ENCODE measurements at regions of chr5 and their contacts with region 1.

Region 1: DNA sequence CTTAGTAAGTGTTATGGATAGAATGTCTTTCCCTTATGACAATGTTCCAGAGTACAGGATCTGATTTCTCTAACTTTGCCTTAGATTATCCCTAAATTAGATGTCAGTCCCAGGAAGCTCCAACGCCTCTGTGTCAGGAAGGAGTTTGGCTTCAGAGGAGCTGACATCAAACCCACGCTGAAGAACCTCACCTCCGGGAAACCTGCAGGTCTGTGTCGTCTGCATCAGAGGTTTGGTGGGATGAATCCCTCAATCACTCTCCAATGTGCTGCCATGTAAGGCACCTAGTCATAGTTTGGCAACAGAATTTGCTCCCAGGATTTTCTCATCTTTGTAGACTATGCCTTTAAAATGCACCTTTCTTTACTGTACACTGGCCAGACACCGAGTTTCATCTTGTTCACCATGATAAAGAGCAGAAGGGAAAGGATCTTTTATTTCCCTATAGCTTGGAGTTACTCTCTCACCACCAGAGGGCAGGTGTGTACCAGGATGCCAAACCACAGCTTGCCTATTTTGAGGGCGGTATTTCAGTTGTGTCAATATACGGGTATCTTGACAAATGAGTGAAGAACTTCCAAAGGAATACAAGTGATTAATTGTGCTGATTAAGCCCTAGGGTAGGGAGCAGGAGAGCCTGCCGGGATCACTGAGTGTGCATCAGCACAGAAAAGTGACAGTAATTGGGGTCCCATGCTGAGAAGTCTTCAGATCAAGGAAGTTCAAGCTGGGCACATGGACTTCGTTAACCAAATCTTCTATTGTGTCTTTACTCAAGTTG is 23.4 kb downstream of the MINAR2 start:
- DNase-seq: peak in 4 of 5 donors; percentile 4 to 57 (median 22)
- H3K4me3 ChIP-seq: no peak overlapping the region
- H3K4me3 Mint-ChIP-seq: no peak overlapping the region
- H3K27ac ChIP-seq: no peak overlapping the region
- H3K27ac Mint-ChIP-seq: no peak overlapping the region
- H3K4me1 ChIP-seq: no peaks in the 10 kb centered on the region
- H3K4me1 Mint-ChIP-seq: peaks cover 6 to 11% (median 6%) of the 10 kb centered on the region in 3 donors
- H3K27me3 ChIP-seq: no peaks in the 10 kb centered on the region
- H3K27me3 Mint-ChIP-seq: no peaks in the 10 kb centered on the region

Region 2: GRCh38 chr5:129601576-129601975 is 169.7 kb before region 1 on chr5:
- CTCF ChIA-PET with region 1: no interaction called
- POLR2A ChIA-PET with region 1: no interaction called
- DNase-seq: no peak
- H3K4me3 ChIP-seq: no peak overlapping the region
- H3K4me3 Mint-ChIP-seq: no peak overlapping the region
- H3K27ac ChIP-seq: no peak overlapping the region
- H3K27ac Mint-ChIP-seq: no peak overlapping the region
- H3K4me1 ChIP-seq: no peaks in the 10 kb centered on the region
- H3K4me1 Mint-ChIP-seq: no peaks in the 10 kb centered on the region
- H3K27me3 ChIP-seq: no peaks in the 10 kb centered on the region
- H3K27me3 Mint-ChIP-seq: no peaks in the 10 kb centered on the region

Region 3: DNA sequence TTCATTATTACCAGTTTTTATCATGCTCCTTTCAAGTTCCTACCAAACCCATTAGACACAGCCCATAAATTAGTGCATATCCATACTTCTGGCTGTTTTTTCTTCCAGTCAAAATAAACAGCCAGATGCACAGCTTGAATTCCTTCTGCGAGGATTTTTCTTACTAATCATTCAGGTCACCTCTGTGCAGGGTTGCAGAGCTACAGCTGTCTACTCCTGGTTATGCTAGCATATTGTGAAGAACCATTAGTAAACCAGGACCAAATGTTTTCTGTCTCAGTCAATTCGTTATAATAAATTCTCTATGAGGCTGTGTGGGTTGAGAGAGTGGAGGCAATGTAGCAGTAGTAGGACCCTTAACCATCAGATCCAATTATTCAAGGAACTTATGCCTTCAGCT is 31.5 kb before region 1 on chr5:
- CTCF ChIA-PET with region 1: no interaction called
- POLR2A ChIA-PET with region 1: no interaction called
- DNase-seq: no peak
- H3K4me3 ChIP-seq: no peak overlapping the region
- H3K4me3 Mint-ChIP-seq: no peak overlapping the region
- H3K27ac ChIP-seq: no peak overlapping the region
- H3K27ac Mint-ChIP-seq: no peak overlapping the region
- H3K4me1 ChIP-seq: no peaks in the 10 kb centered on the region
- H3K4me1 Mint-ChIP-seq: no peaks in the 10 kb centered on the region
- H3K27me3 ChIP-seq: no peaks in the 10 kb centered on the region
- H3K27me3 Mint-ChIP-seq: no peaks in the 10 kb centered on the region

Region 4: GRCh38 chr5:129760636-129761505 is 10.4 kb before region 1 on chr5:
- CTCF ChIA-PET with region 1: interaction called, 13 read pairs
- POLR2A ChIA-PET with region 1: no interaction called
- DNase-seq: no peak
- H3K4me3 ChIP-seq: no peak overlapping the region
- H3K4me3 Mint-ChIP-seq: no peak overlapping the region
- H3K27ac ChIP-seq: no peak overlapping the region
- H3K27ac Mint-ChIP-seq: no peak overlapping the region
- H3K4me1 ChIP-seq: no peaks in the 10 kb centered on the region
- H3K4me1 Mint-ChIP-seq: no peaks in the 10 kb centered on the region
- H3K27me3 ChIP-seq: no peaks in the 10 kb centered on the region
- H3K27me3 Mint-ChIP-seq: no peaks in the 10 kb centered on the region

Region 5: GRCh38 chr5:129821477-129822131 is 50.4 kb after region 1 on chr5:
- CTCF ChIA-PET with region 1: no interaction called
- POLR2A ChIA-PET with region 1: no interaction called
- DNase-seq: no peak
- H3K4me3 ChIP-seq: no peak overlapping the region
- H3K4me3 Mint-ChIP-seq: no peak overlapping the region
- H3K27ac ChIP-seq: no peak overlapping the region
- H3K27ac Mint-ChIP-seq: no peak overlapping the region
- H3K4me1 ChIP-seq: no peaks in the 10 kb centered on the region
- H3K4me1 Mint-ChIP-seq: no peaks in the 10 kb centered on the region
- H3K27me3 ChIP-seq: no peaks in the 10 kb centered on the region
- H3K27me3 Mint-ChIP-seq: peaks cover 5 to 18% of the 10 kb centered on the region in 2 donors

Region 6: GRCh38 chr5:131109540-131110255 is 1338.5 kb after region 1 on chr5:
- CTCF ChIA-PET with region 1: interaction called, 11 read pairs
- POLR2A ChIA-PET with region 1: no interaction called
- DNase-seq: peak in 2 of 5 donors; percentile 32 to 35
- H3K4me3 ChIP-seq: no peak overlapping the region
- H3K4me3 Mint-ChIP-seq: no peak overlapping the region
- H3K27ac ChIP-seq: no peak overlapping the region
- H3K27ac Mint-ChIP-seq: no peak overlapping the region
- H3K4me1 ChIP-seq: no peaks in the 10 kb centered on the region
- H3K4me1 Mint-ChIP-seq: peaks cover 3 to 8% (median 8%) of the 10 kb centered on the region in 3 donors
- H3K27me3 ChIP-seq: no peaks in the 10 kb centered on the region
- H3K27me3 Mint-ChIP-seq: no peaks in the 10 kb centered on the region